ENCODE measurements at regions of chr1 and their contacts with region 1.

Region 1: GRCh38 chr1:234699795-234700665 is 90.1 kb upstream of the IRF2BP2 start:
- DNase-seq: no peak
- ATAC-seq: peak in 1 of 4 experiments; percentile 32
- H3K4me3 ChIP-seq: no peak overlapping the region
- H3K4me3 Mint-ChIP-seq: no peak overlapping the region
- H3K27ac ChIP-seq: no peak overlapping the region
- H3K27ac Mint-ChIP-seq: no peak overlapping the region
- H3K4me1 ChIP-seq: peaks cover 0 to 4% of the 10 kb centered on the region in 2 experiments
- H3K4me1 Mint-ChIP-seq: peaks cover 0 to 7% (median 3%) of the 10 kb centered on the region in 3 donors
- H3K27me3 ChIP-seq: no peaks in the 10 kb centered on the region
- H3K27me3 Mint-ChIP-seq: no peaks in the 10 kb centered on the region

Region 2: GRCh38 chr1:234659538-234659937 is 40.5 kb before region 1 on chr1:
- CTCF ChIA-PET with region 1: no interaction called
- POLR2A ChIA-PET with region 1: no interaction called
- DNase-seq: no peak
- ATAC-seq: no peak
- H3K4me3 ChIP-seq: no peak overlapping the region
- H3K4me3 Mint-ChIP-seq: no peak overlapping the region
- H3K27ac ChIP-seq: no peak overlapping the region
- H3K27ac Mint-ChIP-seq: no peak overlapping the region
- H3K4me1 ChIP-seq: no peaks in the 10 kb centered on the region
- H3K4me1 Mint-ChIP-seq: peaks cover 3 to 8% (median 4%) of the 10 kb centered on the region in 3 donors
- H3K27me3 ChIP-seq: no peaks in the 10 kb centered on the region
- H3K27me3 Mint-ChIP-seq: no peaks in the 10 kb centered on the region

Region 3: GRCh38 chr1:234683861-234684632 is 16.0 kb before region 1 on chr1:
- CTCF ChIA-PET with region 1: no interaction called
- POLR2A ChIA-PET with region 1: no interaction called
- DNase-seq: peak in 1 of 35 experiments; percentile 26
- ATAC-seq: no peak
- H3K4me3 ChIP-seq: no peak overlapping the region
- H3K4me3 Mint-ChIP-seq: no peak overlapping the region
- H3K27ac ChIP-seq: no peak overlapping the region
- H3K27ac Mint-ChIP-seq: no peak overlapping the region
- H3K4me1 ChIP-seq: no peaks in the 10 kb centered on the region
- H3K4me1 Mint-ChIP-seq: no peaks in the 10 kb centered on the region
- H3K27me3 ChIP-seq: no peaks in the 10 kb centered on the region
- H3K27me3 Mint-ChIP-seq: no peaks in the 10 kb centered on the region

Region 4: GRCh38 chr1:234987415-234988154 is 287.6 kb after region 1 on chr1:
- CTCF ChIA-PET with region 1: no interaction called
- POLR2A ChIA-PET with region 1: no interaction called
- DNase-seq: peak in 1 of 35 experiments; percentile 37
- ATAC-seq: peak in 2 of 4 experiments; percentile 33 to 59
- H3K4me3 ChIP-seq: no peak overlapping the region
- H3K4me3 Mint-ChIP-seq: peak overlapping the region; percentile 4 to 43 (median 25)
- H3K27ac ChIP-seq: no peak overlapping the region
- H3K27ac Mint-ChIP-seq: peak overlapping the region; percentile 74 to 76
- H3K4me1 ChIP-seq: peaks cover 2 to 31% of the 10 kb centered on the region in 2 experiments
- H3K4me1 Mint-ChIP-seq: peaks cover 31 to 53% (median 41%) of the 10 kb centered on the region in 3 donors
- H3K27me3 ChIP-seq: no peaks in the 10 kb centered on the region
- H3K27me3 Mint-ChIP-seq: no peaks in the 10 kb centered on the region

Region 5: GRCh38 chr1:235190431-235190830 is 490.4 kb after region 1 on chr1:
- CTCF ChIA-PET with region 1: no interaction called
- POLR2A ChIA-PET with region 1: interaction called in 1 of 2 experiments, 13 read pairs
- DNase-seq: no peak
- ATAC-seq: no peak
- H3K4me3 ChIP-seq: no peak overlapping the region
- H3K4me3 Mint-ChIP-seq: no peak overlapping the region
- H3K27ac ChIP-seq: no peak overlapping the region
- H3K27ac Mint-ChIP-seq: peak overlapping the region; percentile 31 to 77
- H3K4me1 ChIP-seq: no peaks in the 10 kb centered on the region
- H3K4me1 Mint-ChIP-seq: peaks cover 12 to 16% (median 13%) of the 10 kb centered on the region in 3 donors
- H3K27me3 ChIP-seq: no peaks in the 10 kb centered on the region
- H3K27me3 Mint-ChIP-seq: no peaks in the 10 kb centered on the region

Measured in T-cell (primary cell).